ENCODE measurements at regions of chr6 and their contacts with region 1.

Region 1: GRCh38 chr6:134174672-134175198 is 122.3 kb upstream of the SLC2A12 start:
- DNase-seq: peak; percentile 89 to 99 (median 94)
- H3K4me3 ChIP-seq: peak overlapping the region; percentile 80 to 98 (median 94)
- H3K27ac ChIP-seq: peak overlapping the region; percentile 96 to 97
- H3K4me1 ChIP-seq: peaks cover 3 to 18% (median 6%) of the 10 kb centered on the region in 3 donors
- H3K27me3 ChIP-seq: no peaks in the 10 kb centered on the region
- CTCF ChIP-seq: no peak

Region 2: DNA sequence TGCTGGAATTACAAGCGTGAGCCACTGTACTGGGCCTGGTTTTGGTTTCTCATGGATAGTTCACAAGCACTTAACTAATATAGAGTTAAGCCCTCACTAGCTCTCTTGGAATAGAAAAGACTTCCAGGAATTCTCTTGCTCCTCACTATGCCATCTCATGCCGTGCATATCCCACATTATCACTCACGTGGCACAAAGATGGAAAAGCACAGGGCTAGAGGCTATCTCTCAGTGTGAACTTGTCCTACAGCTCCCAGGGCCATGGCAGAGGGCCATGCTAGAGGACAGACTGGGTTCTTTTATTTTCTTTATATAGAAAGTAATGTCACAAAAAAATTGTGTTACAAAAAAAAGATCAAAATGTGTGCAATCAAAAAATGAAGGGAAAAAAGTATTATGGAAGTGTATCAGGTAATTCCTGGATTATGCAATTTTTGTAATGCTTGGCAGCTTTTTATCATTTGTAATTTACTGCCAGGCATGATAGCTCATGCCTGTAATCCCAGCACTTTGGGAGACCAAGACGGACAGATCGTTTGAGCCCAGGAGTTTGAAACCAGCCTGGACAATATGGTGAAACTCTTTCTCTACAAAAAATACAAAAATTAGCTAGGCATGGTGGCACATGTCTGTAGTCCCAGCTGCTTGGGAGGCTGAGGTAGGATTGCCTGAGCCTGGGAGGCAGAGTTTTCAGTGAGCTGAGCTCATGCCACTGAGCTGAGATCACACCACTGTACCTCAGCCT is 115.9 kb before region 1 on chr6:
- intact Hi-C with region 1: no loop called
- DNase-seq: no peak
- H3K4me3 ChIP-seq: no peak overlapping the region
- H3K27ac ChIP-seq: no peak overlapping the region
- H3K4me1 ChIP-seq: peaks cover 0 to 9% (median 0%) of the 10 kb centered on the region in 3 donors
- H3K27me3 ChIP-seq: no peaks in the 10 kb centered on the region
- CTCF ChIP-seq: no peak

Region 3: GRCh38 chr6:134640975-134641429 is 466.3 kb after region 1 on chr6:
- intact Hi-C with region 1: loop called (anchors 10 kb)
- DNase-seq: peak in 4 of 5 donors; percentile 73 to 86 (median 76)
- H3K4me3 ChIP-seq: no peak overlapping the region
- H3K27ac ChIP-seq: peak overlapping the region; percentile 62 to 63
- H3K4me1 ChIP-seq: peaks cover 0 to 20% (median 5%) of the 10 kb centered on the region in 3 donors
- H3K27me3 ChIP-seq: no peaks in the 10 kb centered on the region
- CTCF ChIP-seq: peak; percentile 89

Region 4: DNA sequence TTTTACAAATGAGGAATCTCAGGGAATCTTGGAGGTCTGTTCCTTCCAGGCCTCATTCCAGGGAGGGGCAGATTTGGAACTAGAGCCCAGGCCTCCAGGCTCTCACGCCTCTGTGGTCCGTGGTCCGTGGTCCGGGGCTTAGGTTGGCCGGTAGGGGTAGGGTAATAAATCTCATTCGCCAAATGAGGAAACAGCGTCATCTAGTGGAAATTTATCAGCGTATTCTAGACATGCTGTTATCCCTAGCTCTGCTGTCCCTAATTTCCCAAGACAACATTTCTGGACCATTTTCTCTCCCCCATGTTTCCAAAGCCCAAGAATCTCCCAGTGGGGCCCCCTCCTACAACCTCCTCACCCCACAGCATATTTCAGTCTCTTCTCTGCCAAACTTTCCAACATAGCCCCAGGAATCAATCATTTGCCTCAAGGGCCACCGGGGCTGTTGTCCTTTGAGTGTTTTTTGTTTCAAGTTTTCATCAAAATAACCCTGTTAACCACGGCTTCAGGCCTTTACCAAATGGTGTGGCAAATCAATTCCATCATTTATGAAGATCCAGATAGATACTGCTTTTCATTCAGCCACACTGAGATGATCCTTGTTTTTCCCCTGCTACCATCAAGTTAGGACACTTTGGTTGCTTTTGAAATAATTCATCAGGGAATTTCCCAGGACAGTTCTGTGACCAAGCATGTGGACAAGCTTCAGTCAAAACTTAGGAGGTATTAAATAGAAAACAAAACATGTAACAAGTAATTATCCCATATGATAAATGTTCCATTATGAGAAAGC is 648.4 kb after region 1 on chr6:
- intact Hi-C with region 1: loop called (anchors 10 kb)
- DNase-seq: peak; percentile 64 to 92 (median 74)
- H3K4me3 ChIP-seq: no peak overlapping the region
- H3K27ac ChIP-seq: no peak overlapping the region
- H3K4me1 ChIP-seq: peaks cover 0 to 27% (median 6%) of the 10 kb centered on the region in 3 donors
- H3K27me3 ChIP-seq: no peaks in the 10 kb centered on the region
- CTCF ChIP-seq: peak; percentile 97

Measured in kidney (tissue), 22 donors.